ENCODE measurements at regions of chr2 and their contacts with region 1.

Region 1: DNA sequence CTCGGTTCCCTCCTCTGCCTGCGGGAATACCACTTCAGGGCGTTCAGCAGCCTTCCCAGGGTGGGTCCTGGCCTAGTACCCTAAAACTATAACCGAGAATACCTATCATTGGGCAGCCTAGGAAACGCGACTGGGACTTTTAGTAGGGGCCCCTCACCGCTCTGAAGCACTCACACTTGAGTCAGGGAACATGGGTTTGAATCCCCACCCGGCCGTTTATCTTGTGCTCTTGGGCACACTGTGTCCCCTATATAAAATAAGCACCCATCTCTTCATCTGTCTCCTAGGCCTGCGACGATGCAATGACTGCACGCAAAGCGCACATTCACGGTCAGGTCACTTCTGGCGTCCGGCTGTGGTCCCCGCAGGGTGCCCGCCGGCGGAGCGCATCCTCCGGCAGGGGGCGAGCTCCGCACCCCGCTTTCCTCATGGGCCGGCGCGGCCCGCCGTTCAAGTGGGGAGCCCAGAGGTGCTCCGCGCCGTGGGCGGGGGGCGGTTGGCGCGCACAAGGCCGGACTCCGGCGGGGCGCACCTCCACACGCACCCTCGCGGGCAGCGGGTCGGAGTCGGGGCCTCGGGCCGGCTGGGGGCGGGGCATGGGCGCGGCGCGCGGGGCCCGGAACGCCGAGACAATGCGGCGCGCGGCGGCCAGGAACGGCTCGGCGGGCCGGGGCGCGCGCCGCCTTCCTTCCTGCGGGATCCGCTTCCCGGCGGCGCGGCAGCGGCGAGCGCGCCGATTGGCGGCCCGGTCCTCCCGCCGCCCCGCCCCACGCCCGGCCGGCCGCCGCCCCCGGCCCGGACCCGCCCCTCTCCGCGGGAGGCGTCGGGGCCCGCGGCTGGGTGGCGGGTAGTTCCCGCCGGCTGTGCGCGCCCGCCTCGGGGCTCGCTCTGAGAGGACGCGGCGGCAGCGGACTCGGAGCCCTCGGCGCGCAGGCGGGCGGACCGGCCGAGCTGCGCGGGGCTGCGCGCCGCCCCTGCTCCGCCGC is at the start of gene ASAP2:
- DNase-seq: peak; percentile 67 to 81
- ATAC-seq: peak; percentile 69 to 85 (median 82)
- H3K4me3 ChIP-seq: peak within 1 kb of the TSS; percentile 70 to 96 (median 87)
- H3K27ac ChIP-seq: peak within 1 kb of the TSS; percentile 76 to 95 (median 90)
- H3K4me1 ChIP-seq: peaks cover 0 to 40% (median 26%) of the 10 kb centered on the region in 9 donors
- H3K27me3 ChIP-seq: peaks cover 0 to 19% (median 0%) of the 10 kb centered on the region in 7 donors
- CTCF ChIP-seq: peak; percentile 77 to 94 (median 79)
- total RNA-seq, gene ASAP2: 9.9 to 16.2 (median 11.8) TPM

Region 2: GRCh38 chr2:9249020-9249800 is 43.0 kb after region 1 on chr2:
- intact Hi-C with region 1: loop called in 1 of 10 experiments (anchors 5 kb)
- DNase-seq: no peak
- ATAC-seq: peak in 4 of 8 donors; percentile 12 to 32 (median 22)
- H3K4me3 ChIP-seq: no peak overlapping the region
- H3K27ac ChIP-seq: peak overlapping the region in 4 of 10 donors; percentile 8 to 81 (median 34)
- H3K4me1 ChIP-seq: peaks cover 15 to 81% (median 59%) of the 10 kb centered on the region in 9 donors
- H3K27me3 ChIP-seq: no peaks in the 10 kb centered on the region
- CTCF ChIP-seq: no peak

Region 3: GRCh38 chr2:9261231-9261883 is 55.1 kb after region 1 on chr2:
- intact Hi-C with region 1: loop called in 4 of 10 experiments (anchors 1 to 10 kb)
- DNase-seq: peak in 1 of 2 donors; percentile 67
- ATAC-seq: peak in 5 of 8 donors; percentile 20 to 40 (median 27)
- H3K4me3 ChIP-seq: no peak overlapping the region
- H3K27ac ChIP-seq: peak overlapping the region; percentile 30 to 95 (median 88)
- H3K4me1 ChIP-seq: peaks cover 51 to 99% (median 89%) of the 10 kb centered on the region in 9 donors
- H3K27me3 ChIP-seq: no peaks in the 10 kb centered on the region
- CTCF ChIP-seq: peak in 1 of 9 donors; percentile 18

Region 4: DNA sequence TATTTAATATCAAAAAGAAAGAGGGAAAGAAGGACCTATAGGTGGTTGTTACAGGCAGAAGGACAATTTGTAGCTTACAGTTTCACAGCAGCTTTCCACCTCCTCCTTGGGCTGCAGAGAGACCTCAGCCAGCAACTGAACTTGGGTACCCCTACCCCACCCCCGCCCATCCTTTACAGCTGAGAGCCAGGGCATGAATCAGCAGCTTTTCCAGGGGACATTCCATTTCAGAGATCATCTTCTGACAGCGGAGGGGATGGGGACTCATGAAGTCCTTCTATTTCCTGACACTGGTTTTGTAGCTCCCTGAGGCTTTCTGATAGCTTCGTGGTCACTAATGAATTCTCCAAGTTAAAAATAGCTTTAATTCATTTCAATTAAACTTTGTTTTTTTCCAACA is 120.7 kb after region 1 on chr2:
- intact Hi-C with region 1: loop called in 8 of 10 experiments (anchors 2 to 5 kb)
- DNase-seq: no peak
- ATAC-seq: peak in 1 of 8 donors; percentile 32
- H3K4me3 ChIP-seq: no peak overlapping the region
- H3K27ac ChIP-seq: peak overlapping the region in 4 of 10 donors; percentile 13 to 54 (median 24)
- H3K4me1 ChIP-seq: peaks cover 0 to 53% (median 32%) of the 10 kb centered on the region in 9 donors
- H3K27me3 ChIP-seq: no peaks in the 10 kb centered on the region
- CTCF ChIP-seq: no peak

Region 5: GRCh38 chr2:9333591-9334171 is 127.4 kb after region 1 on chr2:
- intact Hi-C with region 1: loop called (anchors 1 to 5 kb)
- DNase-seq: peak; percentile 28 to 73
- ATAC-seq: peak; percentile 74 to 85 (median 81)
- H3K4me3 ChIP-seq: no peak overlapping the region
- H3K27ac ChIP-seq: peak overlapping the region in 3 of 10 donors; percentile 1 to 39 (median 13)
- H3K4me1 ChIP-seq: peaks cover 0 to 59% (median 36%) of the 10 kb centered on the region in 9 donors
- H3K27me3 ChIP-seq: no peaks in the 10 kb centered on the region
- CTCF ChIP-seq: peak; percentile 44 to 87 (median 69)

Region 6: GRCh38 chr2:9423100-9423921 is 217.1 kb after region 1 on chr2 and contains the starts of genes CPSF3 and ITGB1BP1:
- intact Hi-C with region 1: loop called in 1 of 10 experiments (anchors 5 kb)
- DNase-seq: peak; percentile 98 to 99
- ATAC-seq: peak; percentile 95 to 98 (median 97)
- H3K4me3 ChIP-seq: peak within 1 kb of the TSS; percentile 49 to 96 (median 91)
- H3K27ac ChIP-seq: peak within 1 kb of the TSS; percentile 59 to 97 (median 95)
- H3K4me1 ChIP-seq: peaks cover 6 to 54% (median 41%) of the 10 kb centered on the region in 9 donors
- H3K27me3 ChIP-seq: no peaks in the 10 kb centered on the region
- CTCF ChIP-seq: peak in 4 of 9 donors; percentile 16 to 22 (median 20)
- total RNA-seq, gene CPSF3: 12.8 to 19.8 (median 16.5) TPM
- total RNA-seq, gene ITGB1BP1: 51.4 to 224 (median 134) TPM

Measured in heart right ventricle (tissue), 16 donors.